Endothelial cell of umbilical vein (primary cell): ENCODE measurements at regions of chr12 and their contacts with region 1.

Region 1: GRCh38 chr12:69359531-69360347 is at the start of gene YEATS4:
- DNase-seq: peak; percentile 92
- H3K4me3 ChIP-seq: peak within 1 kb of the TSS; percentile 6 to 89 (median 65)
- H3K27ac ChIP-seq: peak within 1 kb of the TSS; percentile 69
- H3K4me1 ChIP-seq: peaks cover 7% of the 10 kb centered on the region
- H3K27me3 ChIP-seq: no peaks in the 10 kb centered on the region
- CTCF ChIP-seq: no peak
- POLR2A ChIP-seq: peak; percentile 68
- total RNA-seq, gene YEATS4: 16.5 and 16.7 TPM in 2 replicates

Region 2: GRCh38 chr12:69284131-69284530 is 75.6 kb before region 1 on chr12:
- CTCF ChIA-PET with region 1: no interaction called
- POLR2A ChIA-PET with region 1: no interaction called
- dilution Hi-C with region 1: no loop called
- intact Hi-C with region 1: no loop called
- DNase-seq: peak; percentile 64
- H3K4me3 ChIP-seq: peak overlapping the region in 1 of 3 experiments; percentile 27
- H3K27ac ChIP-seq: no peak overlapping the region
- H3K4me1 ChIP-seq: peaks cover 8% of the 10 kb centered on the region
- H3K27me3 ChIP-seq: peaks cover 10 to 30% of the 10 kb centered on the region in 2 experiments
- CTCF ChIP-seq: peak in 1 of 2 donors; percentile 18
- POLR2A ChIP-seq: no peak

Region 3: DNA sequence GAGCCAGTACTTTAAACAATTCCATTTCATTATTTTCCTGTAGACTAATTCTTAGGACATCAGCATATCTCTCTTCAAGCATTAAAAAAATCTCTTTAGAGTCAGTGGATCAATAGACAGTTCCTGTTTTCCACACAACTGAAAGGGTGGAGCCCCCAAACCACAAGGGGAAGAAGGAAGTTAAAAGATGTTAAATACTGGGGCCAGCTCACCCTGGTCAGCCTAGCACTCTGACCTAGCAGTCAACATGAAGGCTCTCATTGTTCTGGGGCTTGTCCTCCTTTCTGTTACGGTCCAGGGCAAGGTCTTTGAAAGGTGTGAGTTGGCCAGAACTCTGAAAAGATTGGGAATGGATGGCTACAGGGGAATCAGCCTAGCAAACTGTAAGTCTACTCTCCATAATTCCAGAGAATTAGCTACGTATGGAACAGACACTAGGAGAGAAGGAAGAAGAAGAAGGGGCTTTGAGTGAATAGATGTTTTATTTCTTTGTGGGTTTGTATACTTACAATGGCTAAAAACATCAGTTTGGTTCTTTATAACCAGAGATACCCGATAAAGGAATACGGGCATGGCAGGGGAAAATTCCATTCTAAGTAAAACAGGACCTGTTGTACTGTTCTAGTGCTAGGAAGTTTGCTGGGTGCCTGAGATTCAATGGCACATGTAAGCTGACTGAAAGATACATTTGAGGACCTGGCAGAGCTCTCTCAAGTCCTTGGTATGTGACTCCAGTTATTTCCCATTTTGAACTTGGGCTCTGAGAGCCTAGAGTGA is 11.4 kb before region 1 on chr12 and contains the start of gene LYZ:
- CTCF ChIA-PET with region 1: interaction called, 15 read pairs
- POLR2A ChIA-PET with region 1: no interaction called
- dilution Hi-C with region 1: no loop called
- intact Hi-C with region 1: no loop called
- DNase-seq: no peak
- H3K4me3 ChIP-seq: no peak within 1 kb of the TSS
- H3K27ac ChIP-seq: no peak within 1 kb of the TSS
- H3K4me1 ChIP-seq: no peaks in the 10 kb centered on the region
- H3K27me3 ChIP-seq: peaks cover 2 to 5% of the 10 kb centered on the region in 2 experiments
- CTCF ChIP-seq: no peak
- POLR2A ChIP-seq: no peak
- total RNA-seq, gene LYZ: not detected in 2 replicates

Region 4: GRCh38 chr12:69383074-69383473 is 23.3 kb after region 1 on chr12:
- CTCF ChIA-PET with region 1: interaction called, 4 read pairs
- POLR2A ChIA-PET with region 1: no interaction called
- dilution Hi-C with region 1: no loop called
- intact Hi-C with region 1: loop called (anchors 1 kb)
- DNase-seq: no peak
- H3K4me3 ChIP-seq: no peak overlapping the region
- H3K27ac ChIP-seq: no peak overlapping the region
- H3K4me1 ChIP-seq: no peaks in the 10 kb centered on the region
- H3K27me3 ChIP-seq: no peaks in the 10 kb centered on the region
- CTCF ChIP-seq: no peak
- POLR2A ChIP-seq: no peak

Region 5: DNA sequence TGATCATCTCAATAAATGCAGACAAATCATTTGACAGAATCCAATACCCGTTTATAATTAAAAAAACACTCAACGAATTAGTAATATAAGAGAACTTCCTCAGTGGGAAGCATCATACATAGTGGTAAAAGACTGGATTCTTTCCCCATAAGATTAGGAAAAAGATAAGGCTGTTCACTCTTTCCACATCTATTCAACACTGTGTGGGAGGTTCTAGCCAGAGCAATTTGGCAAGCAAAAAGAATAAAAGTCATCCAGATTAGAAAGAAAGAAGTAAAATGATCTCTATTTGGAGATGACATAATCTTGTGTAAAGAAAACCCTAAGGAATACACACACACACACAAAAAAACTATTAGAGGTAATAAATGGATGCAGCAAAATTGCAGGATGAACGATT is 38.2 kb after region 1 on chr12:
- CTCF ChIA-PET with region 1: no interaction called
- POLR2A ChIA-PET with region 1: no interaction called
- dilution Hi-C with region 1: no loop called
- intact Hi-C with region 1: no loop called
- DNase-seq: no peak
- H3K4me3 ChIP-seq: no peak overlapping the region
- H3K27ac ChIP-seq: no peak overlapping the region
- H3K4me1 ChIP-seq: no peaks in the 10 kb centered on the region
- H3K27me3 ChIP-seq: no peaks in the 10 kb centered on the region
- CTCF ChIP-seq: no peak
- POLR2A ChIP-seq: no peak